Ascending aorta (tissue), 2 donors: ENCODE measurements at regions of chr1 and their contacts with region 1.

Region 1: DNA sequence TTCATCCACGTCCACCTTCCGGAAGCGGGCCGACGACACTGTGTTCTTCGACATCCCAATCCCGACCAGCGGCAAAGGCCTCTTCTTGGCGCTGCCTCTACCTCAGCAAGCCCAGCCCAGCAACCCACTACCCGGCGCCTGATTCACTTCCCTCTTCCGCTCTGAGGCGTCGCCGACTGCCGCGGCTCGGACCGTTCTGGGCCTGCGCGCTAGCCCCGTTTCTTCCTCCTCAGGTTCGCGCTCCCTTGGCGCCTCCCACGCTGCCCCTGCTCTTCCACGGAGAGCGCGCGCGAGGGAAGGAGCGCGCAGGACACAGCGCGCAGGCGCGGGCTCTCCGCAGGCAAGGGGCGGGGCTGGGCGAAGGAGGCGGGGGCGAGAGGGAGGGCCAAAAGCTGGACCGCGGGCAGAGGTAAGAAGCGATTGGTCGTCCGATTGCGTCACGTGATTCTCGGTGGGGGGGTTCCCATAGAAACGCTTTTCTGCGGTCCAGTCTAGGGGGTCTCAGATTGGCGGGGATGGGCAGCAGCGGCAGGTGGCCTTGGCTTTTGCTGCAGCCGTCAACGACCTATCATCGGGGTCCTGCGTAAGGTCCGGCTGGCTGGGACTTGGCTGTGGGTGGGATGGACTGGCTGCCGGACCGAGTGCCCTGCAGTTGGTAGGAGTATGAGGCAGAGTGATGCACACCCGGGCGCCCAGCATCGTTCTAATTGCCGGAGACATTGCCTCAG is at the start of gene ARPC5:
- DNase-seq: peak; percentile 85 to 97
- H3K4me3 ChIP-seq: peak within 1 kb of the TSS; percentile 93 to 97
- H3K27ac ChIP-seq: peak within 1 kb of the TSS; percentile 95 to 99
- H3K4me1 ChIP-seq: peaks cover 0 to 6% of the 10 kb centered on the region in 2 donors
- H3K27me3 ChIP-seq: no peaks in the 10 kb centered on the region
- CTCF ChIP-seq: no peak
- total RNA-seq, gene ARPC5: 48.3 TPM

Region 2: GRCh38 chr1:182614796-182615454 is 1020.8 kb before region 1 on chr1:
- intact Hi-C with region 1: loop called (anchors 10 kb)
- DNase-seq: peak; percentile 73 to 93
- H3K4me3 ChIP-seq: peak overlapping the region; percentile 55 to 61
- H3K27ac ChIP-seq: peak overlapping the region; percentile 93 to 96
- H3K4me1 ChIP-seq: peaks cover 23 to 36% of the 10 kb centered on the region in 2 donors
- H3K27me3 ChIP-seq: no peaks in the 10 kb centered on the region
- CTCF ChIP-seq: no peak

Region 3: DNA sequence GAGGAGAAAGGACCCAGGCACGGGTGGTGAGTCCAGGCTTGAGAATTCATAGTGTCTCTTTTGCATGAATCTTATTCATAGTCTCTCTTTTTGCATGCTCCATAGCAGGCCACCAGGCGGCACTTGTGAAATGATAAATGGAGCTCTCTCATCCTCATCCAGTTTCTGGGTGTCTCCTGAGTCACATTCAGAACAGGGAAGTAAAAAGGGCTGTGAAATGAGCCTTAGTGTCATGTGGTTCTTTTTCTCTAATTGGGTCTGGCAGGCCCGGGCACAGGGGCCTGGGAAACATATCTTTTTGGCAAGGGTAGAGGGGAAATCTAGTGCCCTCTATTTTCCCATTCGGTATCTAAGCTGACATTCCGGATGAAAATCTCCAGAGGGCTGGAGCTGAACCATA is 26.5 kb before region 1 on chr1:
- intact Hi-C with region 1: loop called (anchors 1 kb)
- DNase-seq: peak in 1 of 2 donors; percentile 86
- H3K4me3 ChIP-seq: peak overlapping the region in 1 of 2 donors; percentile 21
- H3K27ac ChIP-seq: peak overlapping the region; percentile 68 to 84
- H3K4me1 ChIP-seq: peaks cover 0 to 16% of the 10 kb centered on the region in 2 donors
- H3K27me3 ChIP-seq: no peaks in the 10 kb centered on the region
- CTCF ChIP-seq: peak; percentile 51 to 64 (median 58)

Region 4: GRCh38 chr1:184386312-184387068 is 750.7 kb after region 1 on chr1 and contains the start of gene C1orf21:
- intact Hi-C with region 1: loop called (anchors 10 kb)
- DNase-seq: peak; percentile 54 to 93
- H3K4me3 ChIP-seq: peak within 1 kb of the TSS; percentile 87 to 98
- H3K27ac ChIP-seq: peak within 1 kb of the TSS; percentile 73 to 75
- H3K4me1 ChIP-seq: peaks cover 0 to 5% of the 10 kb centered on the region in 2 donors
- H3K27me3 ChIP-seq: no peaks in the 10 kb centered on the region
- CTCF ChIP-seq: no peak
- total RNA-seq, gene C1orf21: 21.8 TPM